Activated B cell treated with CpG ODN at 0.5 μM for 24 hours (primary cell): ENCODE measurements at regions of chr1 and their contacts with region 1.

Region 1: DNA sequence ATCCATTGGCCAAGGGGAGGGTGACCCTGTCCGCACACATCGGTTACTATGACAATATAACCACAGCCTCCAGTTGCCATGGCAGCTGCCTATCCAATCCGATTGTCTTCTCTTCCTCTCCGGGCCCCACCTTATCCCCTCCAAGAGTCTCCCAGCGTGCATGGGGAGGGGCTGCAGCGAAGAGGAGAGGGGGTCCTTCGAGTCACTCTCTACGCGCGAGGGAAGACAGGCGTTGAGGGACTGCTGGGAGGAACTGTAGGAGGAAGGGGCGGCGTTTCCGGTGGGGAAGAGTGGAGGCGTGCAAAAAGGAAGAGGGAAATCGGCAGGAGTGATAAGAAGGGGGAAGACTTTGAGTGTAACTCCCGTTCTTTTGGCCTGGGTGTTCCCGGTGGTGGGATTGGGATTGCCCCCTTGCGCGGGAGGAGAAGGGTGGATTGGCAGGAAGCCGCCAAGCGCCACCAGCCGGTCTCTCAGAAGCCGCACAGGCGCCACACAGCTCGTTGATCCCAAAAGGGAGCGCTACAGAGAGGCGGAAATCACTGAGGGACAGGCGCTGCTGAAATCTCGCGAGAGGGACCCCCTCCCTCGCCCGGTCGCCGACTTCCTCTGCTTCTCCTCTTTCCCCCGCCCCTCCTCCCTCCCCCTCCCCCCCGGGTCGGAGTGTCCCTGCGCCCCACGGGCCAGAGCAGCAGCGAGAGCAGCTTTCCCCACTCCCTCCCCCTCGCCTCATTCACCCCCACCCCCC is 384 bp upstream of the SMG7 start:
- DNase-seq: peak; percentile 89
- ATAC-seq: peak; percentile 68
- H3K4me3 Mint-ChIP-seq: peak overlapping the region; percentile 97
- H3K27ac Mint-ChIP-seq: peak overlapping the region; percentile 100
- H3K4me1 Mint-ChIP-seq: peaks cover 36% of the 10 kb centered on the region
- H3K27me3 Mint-ChIP-seq: no peaks in the 10 kb centered on the region
- CTCF ChIP-seq: no peak

Region 2: GRCh38 chr1:182839209-182840065 is 632.5 kb before region 1 on chr1 and contains the start of gene DHX9:
- CTCF ChIA-PET with region 1: no interaction called
- POLR2A ChIA-PET with region 1: interaction called, 5 read pairs
- intact Hi-C with region 1: loop called (anchors 1 kb)
- DNase-seq: peak; percentile 99
- ATAC-seq: peak; percentile 82
- H3K4me3 Mint-ChIP-seq: peak within 1 kb of the TSS; percentile 92
- H3K27ac Mint-ChIP-seq: peak within 1 kb of the TSS; percentile 98
- H3K4me1 Mint-ChIP-seq: peaks cover 39% of the 10 kb centered on the region
- H3K27me3 Mint-ChIP-seq: no peaks in the 10 kb centered on the region
- CTCF ChIP-seq: no peak
- total RNA-seq, gene DHX9: 265 and 266 TPM in 2 replicates

Region 3: GRCh38 chr1:183032122-183032921 is 439.6 kb before region 1 on chr1:
- CTCF ChIA-PET with region 1: no interaction called
- POLR2A ChIA-PET with region 1: no interaction called
- intact Hi-C with region 1: no loop called
- DNase-seq: no peak
- ATAC-seq: no peak
- H3K4me3 Mint-ChIP-seq: no peak overlapping the region
- H3K27ac Mint-ChIP-seq: no peak overlapping the region
- H3K4me1 Mint-ChIP-seq: peaks cover 35% of the 10 kb centered on the region
- H3K27me3 Mint-ChIP-seq: no peaks in the 10 kb centered on the region
- CTCF ChIP-seq: no peak

Region 4: DNA sequence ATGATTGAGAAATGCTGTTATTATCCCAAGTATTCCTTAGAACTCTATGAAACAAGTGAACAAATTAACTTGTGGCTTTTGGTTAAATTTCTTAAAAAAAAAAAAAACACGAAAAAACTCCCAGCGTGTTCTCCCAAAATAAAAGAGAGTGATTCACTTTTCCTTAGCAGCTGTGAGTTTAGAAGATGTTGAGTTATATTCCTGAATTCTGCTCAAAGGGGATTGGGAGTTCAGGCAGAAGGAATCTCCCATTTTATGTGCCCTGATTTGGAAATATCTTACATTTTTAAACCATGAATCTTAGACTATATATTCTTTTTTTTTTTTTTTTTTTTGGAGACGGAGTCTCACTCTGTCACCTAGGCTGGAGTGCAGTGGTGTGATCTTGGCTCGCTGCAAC is 34.6 kb after region 1 on chr1:
- CTCF ChIA-PET with region 1: no interaction called
- POLR2A ChIA-PET with region 1: no interaction called
- intact Hi-C with region 1: loop called (anchors 5 kb)
- DNase-seq: no peak
- ATAC-seq: no peak
- H3K4me3 Mint-ChIP-seq: no peak overlapping the region
- H3K27ac Mint-ChIP-seq: no peak overlapping the region
- H3K4me1 Mint-ChIP-seq: peaks cover 11% of the 10 kb centered on the region
- H3K27me3 Mint-ChIP-seq: no peaks in the 10 kb centered on the region
- CTCF ChIP-seq: no peak

Region 5: DNA sequence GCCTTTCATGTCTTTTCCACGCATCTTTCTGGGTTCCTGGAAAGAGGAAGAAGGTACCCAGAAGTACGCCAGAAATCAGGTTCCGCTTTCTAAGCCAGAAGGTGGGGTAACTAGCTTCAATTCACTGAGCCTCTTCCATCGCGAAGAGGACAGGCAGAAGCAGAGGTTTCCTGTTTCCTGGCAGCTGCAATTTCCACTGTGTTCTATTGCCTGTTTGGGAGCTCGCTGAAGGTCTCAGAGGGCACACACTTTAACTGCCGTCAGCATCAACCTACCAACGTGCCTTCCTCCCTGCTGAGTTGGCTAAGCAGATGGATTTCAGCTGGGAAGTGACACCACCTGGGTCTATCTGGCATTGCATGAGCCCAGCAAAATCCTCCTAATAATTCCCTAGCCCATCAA is 108.4 kb after region 1 on chr1:
- CTCF ChIA-PET with region 1: no interaction called
- POLR2A ChIA-PET with region 1: interaction called, 27 read pairs
- intact Hi-C with region 1: loop called (anchors 2 kb)
- DNase-seq: no peak
- ATAC-seq: peak; percentile 86
- H3K4me3 Mint-ChIP-seq: peak overlapping the region; percentile 61
- H3K27ac Mint-ChIP-seq: peak overlapping the region; percentile 85
- H3K4me1 Mint-ChIP-seq: peaks cover 32% of the 10 kb centered on the region
- H3K27me3 Mint-ChIP-seq: no peaks in the 10 kb centered on the region
- CTCF ChIP-seq: no peak

Region 6: DNA sequence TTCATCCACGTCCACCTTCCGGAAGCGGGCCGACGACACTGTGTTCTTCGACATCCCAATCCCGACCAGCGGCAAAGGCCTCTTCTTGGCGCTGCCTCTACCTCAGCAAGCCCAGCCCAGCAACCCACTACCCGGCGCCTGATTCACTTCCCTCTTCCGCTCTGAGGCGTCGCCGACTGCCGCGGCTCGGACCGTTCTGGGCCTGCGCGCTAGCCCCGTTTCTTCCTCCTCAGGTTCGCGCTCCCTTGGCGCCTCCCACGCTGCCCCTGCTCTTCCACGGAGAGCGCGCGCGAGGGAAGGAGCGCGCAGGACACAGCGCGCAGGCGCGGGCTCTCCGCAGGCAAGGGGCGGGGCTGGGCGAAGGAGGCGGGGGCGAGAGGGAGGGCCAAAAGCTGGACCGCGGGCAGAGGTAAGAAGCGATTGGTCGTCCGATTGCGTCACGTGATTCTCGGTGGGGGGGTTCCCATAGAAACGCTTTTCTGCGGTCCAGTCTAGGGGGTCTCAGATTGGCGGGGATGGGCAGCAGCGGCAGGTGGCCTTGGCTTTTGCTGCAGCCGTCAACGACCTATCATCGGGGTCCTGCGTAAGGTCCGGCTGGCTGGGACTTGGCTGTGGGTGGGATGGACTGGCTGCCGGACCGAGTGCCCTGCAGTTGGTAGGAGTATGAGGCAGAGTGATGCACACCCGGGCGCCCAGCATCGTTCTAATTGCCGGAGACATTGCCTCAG is 163.9 kb after region 1 on chr1 and contains the start of gene ARPC5:
- CTCF ChIA-PET with region 1: no interaction called
- POLR2A ChIA-PET with region 1: interaction called, 16 read pairs
- intact Hi-C with region 1: loop called (anchors 1 kb)
- DNase-seq: peak; percentile 95
- ATAC-seq: peak; percentile 89
- H3K4me3 Mint-ChIP-seq: peak within 1 kb of the TSS; percentile 100
- H3K27ac Mint-ChIP-seq: peak within 1 kb of the TSS; percentile 100
- H3K4me1 Mint-ChIP-seq: peaks cover 46% of the 10 kb centered on the region
- H3K27me3 Mint-ChIP-seq: no peaks in the 10 kb centered on the region
- CTCF ChIP-seq: no peak
- total RNA-seq, gene ARPC5: 193 and 224 TPM in 2 replicates

Region 7: GRCh38 chr1:184051485-184052193 is 579.7 kb after region 1 on chr1 and contains the start of gene TSEN15:
- CTCF ChIA-PET with region 1: no interaction called
- POLR2A ChIA-PET with region 1: interaction called, 5 read pairs
- intact Hi-C with region 1: loop called (anchors 2 kb)
- DNase-seq: peak; percentile 76
- ATAC-seq: peak; percentile 95
- H3K4me3 Mint-ChIP-seq: peak within 1 kb of the TSS; percentile 98
- H3K27ac Mint-ChIP-seq: peak within 1 kb of the TSS; percentile 98
- H3K4me1 Mint-ChIP-seq: peaks cover 36% of the 10 kb centered on the region
- H3K27me3 Mint-ChIP-seq: peaks cover 26% of the 10 kb centered on the region
- CTCF ChIP-seq: no peak
- total RNA-seq, gene TSEN15: 60.8 and 61.2 TPM in 2 replicates